Right cardiac atrium (tissue), 5 donors: ENCODE measurements at regions of chr21 and their contacts with region 1.

Region 1: GRCh38 chr21:45981151-45982089 is at the start of gene COL6A1:
- DNase-seq: peak; percentile 90 to 94 (median 94)
- ATAC-seq: peak; percentile 77 to 81
- H3K4me3 ChIP-seq: peak within 1 kb of the TSS; percentile 81
- H3K27ac ChIP-seq: peak within 1 kb of the TSS; percentile 76
- H3K4me1 ChIP-seq: no peaks in the 10 kb centered on the region
- H3K27me3 ChIP-seq: no peaks in the 10 kb centered on the region
- total RNA-seq, gene COL6A1: 112 to 192 (median 171) TPM

Region 2: GRCh38 chr21:45680215-45680614 is 301.2 kb before region 1 on chr21:
- intact Hi-C with region 1: no loop called
- DNase-seq: no peak
- ATAC-seq: no peak
- H3K4me3 ChIP-seq: no peak overlapping the region
- H3K27ac ChIP-seq: no peak overlapping the region
- H3K4me1 ChIP-seq: no peaks in the 10 kb centered on the region
- H3K27me3 ChIP-seq: no peaks in the 10 kb centered on the region

Region 3: GRCh38 chr21:45724345-45724961 is 257.0 kb before region 1 on chr21:
- intact Hi-C with region 1: no loop called
- DNase-seq: peak; percentile 47 to 76 (median 74)
- ATAC-seq: peak; percentile 81 to 85
- H3K4me3 ChIP-seq: no peak overlapping the region
- H3K27ac ChIP-seq: no peak overlapping the region
- H3K4me1 ChIP-seq: no peaks in the 10 kb centered on the region
- H3K27me3 ChIP-seq: no peaks in the 10 kb centered on the region

Region 4: DNA sequence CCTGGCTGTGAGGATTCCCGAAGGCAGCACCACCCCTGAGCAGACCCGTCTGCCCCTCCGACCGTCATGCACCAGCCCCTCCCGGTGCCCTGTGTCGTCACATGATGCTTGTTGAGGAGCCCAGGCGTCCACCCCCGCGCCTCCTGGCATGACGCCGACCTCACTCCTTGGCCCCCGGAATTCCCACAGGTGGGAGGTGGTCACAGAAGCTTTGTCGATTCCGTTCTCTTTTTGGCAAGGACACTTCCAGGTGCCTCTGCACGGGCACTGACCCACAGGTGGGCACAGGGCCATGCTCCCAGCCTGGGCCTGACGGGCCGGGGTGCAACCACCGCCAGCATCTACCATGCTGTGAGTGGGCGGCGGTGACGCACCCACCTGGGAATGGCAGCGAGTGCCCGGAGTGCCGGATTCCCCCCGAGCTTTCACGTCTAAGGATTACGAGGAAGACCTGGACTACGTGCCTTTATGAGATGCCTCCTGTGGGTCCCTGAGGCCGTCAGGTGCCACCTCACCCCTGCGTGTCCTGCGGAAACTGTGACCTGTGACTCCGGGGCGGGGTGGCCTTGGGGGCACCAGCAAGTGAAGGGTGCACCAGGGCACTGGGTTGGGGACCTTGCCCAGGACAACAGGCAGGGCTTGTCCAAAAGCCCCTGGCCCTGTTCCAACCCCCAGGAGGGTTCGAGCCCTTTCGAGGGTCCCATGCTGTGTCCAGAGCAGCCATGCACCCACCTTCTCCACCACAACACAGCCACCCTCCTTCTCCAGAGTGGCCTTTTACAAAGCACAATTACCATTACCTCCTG is 31.3 kb before region 1 on chr21:
- intact Hi-C with region 1: no loop called
- DNase-seq: peak in 1 of 3 donors; percentile 71
- ATAC-seq: peak; percentile 3 to 5
- H3K4me3 ChIP-seq: no peak overlapping the region
- H3K27ac ChIP-seq: no peak overlapping the region
- H3K4me1 ChIP-seq: no peaks in the 10 kb centered on the region
- H3K27me3 ChIP-seq: no peaks in the 10 kb centered on the region

Region 5: GRCh38 chr21:46025113-46025770 is 43.8 kb after region 1 on chr21:
- intact Hi-C with region 1: loop called in 1 of 4 experiments (anchors 5 kb)
- DNase-seq: no peak
- ATAC-seq: no peak
- H3K4me3 ChIP-seq: no peak overlapping the region
- H3K27ac ChIP-seq: no peak overlapping the region
- H3K4me1 ChIP-seq: peaks cover 4% of the 10 kb centered on the region
- H3K27me3 ChIP-seq: no peaks in the 10 kb centered on the region

Region 6: DNA sequence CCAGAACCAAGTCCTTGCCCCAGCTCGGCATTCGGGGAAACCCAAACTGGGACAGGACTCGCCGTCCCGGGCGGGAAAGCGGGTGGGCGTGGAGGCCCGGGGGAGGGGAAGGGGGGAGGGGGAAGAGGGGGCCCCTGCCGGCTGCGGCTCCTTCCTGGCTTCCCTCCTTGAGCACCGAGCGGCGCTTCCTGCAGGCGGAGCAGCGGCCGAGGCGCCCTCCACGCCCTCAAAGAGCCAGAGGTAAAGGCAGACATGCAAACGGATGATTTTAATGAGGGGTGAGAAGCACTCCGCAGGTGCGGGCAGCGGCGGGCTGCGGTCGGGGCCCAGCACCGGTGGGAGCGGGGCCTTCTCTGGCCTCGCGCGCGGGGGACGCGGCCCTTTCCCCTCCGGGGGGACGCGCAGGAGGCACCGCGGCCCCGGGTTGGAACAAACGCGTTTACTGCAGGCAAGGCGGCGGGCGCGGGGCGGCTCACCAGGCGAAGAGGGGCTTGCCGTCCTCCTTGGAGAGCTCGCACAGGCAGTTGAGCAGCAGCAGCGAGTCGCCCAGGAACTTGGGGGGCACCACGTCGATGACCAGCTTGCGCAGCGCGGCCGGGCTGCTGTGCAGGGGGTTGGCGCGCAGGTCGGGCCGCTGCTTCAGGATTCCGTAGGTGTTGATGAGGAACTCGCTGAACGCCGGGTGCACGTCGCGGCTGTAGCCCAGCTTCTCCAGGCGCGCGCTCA is 179.7 kb after region 1 on chr21:
- intact Hi-C with region 1: no loop called
- DNase-seq: peak; percentile 12 to 55 (median 26)
- ATAC-seq: no peak
- H3K4me3 ChIP-seq: no peak overlapping the region
- H3K27ac ChIP-seq: no peak overlapping the region
- H3K4me1 ChIP-seq: no peaks in the 10 kb centered on the region
- H3K27me3 ChIP-seq: no peaks in the 10 kb centered on the region